GM13977 (cell line): ENCODE measurements at regions of chr10 and their contacts with region 1.

Region 1: GRCh38 chr10:25078658-25079431 is 62.4 kb downstream of the THNSL1 start:
- DNase-seq: no peak
- CTCF ChIP-seq: no peak

Region 2: GRCh38 chr10:24642622-24643417 is 436.0 kb before region 1 on chr10:
- in situ Hi-C with region 1: loop called (anchors 10 kb)
- DNase-seq: peak; percentile 40
- CTCF ChIP-seq: peak; percentile 75